Astrocyte of the cerebellum (primary cell): ENCODE measurements at regions of chr12 and their contacts with region 1.

Region 1: GRCh38 chr12:61107118-61107517 is 1153.1 kb upstream of the USP15 start:
- DNase-seq: no peak
- H3K4me3 ChIP-seq: no peak overlapping the region
- CTCF ChIP-seq: no peak

Region 2: GRCh38 chr12:61072717-61073116 is 34.4 kb before region 1 on chr12:
- in situ Hi-C with region 1: loop called (anchors 5 kb)
- DNase-seq: no peak
- H3K4me3 ChIP-seq: no peak overlapping the region
- CTCF ChIP-seq: no peak

Region 3: DNA sequence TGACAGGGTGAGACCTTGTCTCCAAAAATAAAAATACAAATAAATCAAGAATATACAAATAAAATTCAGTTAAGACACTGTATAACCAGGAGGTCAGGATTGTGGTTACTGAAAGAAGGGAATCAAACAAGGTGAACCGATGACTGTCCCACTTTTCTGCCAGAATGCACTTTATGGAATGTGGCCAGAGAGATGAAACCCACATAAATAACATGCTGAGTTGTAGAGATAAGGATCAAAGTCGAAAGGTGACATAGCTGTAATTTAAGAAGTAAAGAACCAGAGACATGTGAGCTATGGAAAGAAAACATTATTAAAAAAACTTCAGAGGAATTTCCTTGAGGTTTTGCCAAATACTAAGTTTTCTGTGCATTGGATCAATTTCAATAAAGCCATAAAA is 54.9 kb after region 1 on chr12:
- in situ Hi-C with region 1: no loop called
- DNase-seq: no peak
- H3K4me3 ChIP-seq: no peak overlapping the region
- CTCF ChIP-seq: no peak